A673 (cell line): ENCODE measurements at regions of chrX and their contacts with region 1.

Region 1: DNA sequence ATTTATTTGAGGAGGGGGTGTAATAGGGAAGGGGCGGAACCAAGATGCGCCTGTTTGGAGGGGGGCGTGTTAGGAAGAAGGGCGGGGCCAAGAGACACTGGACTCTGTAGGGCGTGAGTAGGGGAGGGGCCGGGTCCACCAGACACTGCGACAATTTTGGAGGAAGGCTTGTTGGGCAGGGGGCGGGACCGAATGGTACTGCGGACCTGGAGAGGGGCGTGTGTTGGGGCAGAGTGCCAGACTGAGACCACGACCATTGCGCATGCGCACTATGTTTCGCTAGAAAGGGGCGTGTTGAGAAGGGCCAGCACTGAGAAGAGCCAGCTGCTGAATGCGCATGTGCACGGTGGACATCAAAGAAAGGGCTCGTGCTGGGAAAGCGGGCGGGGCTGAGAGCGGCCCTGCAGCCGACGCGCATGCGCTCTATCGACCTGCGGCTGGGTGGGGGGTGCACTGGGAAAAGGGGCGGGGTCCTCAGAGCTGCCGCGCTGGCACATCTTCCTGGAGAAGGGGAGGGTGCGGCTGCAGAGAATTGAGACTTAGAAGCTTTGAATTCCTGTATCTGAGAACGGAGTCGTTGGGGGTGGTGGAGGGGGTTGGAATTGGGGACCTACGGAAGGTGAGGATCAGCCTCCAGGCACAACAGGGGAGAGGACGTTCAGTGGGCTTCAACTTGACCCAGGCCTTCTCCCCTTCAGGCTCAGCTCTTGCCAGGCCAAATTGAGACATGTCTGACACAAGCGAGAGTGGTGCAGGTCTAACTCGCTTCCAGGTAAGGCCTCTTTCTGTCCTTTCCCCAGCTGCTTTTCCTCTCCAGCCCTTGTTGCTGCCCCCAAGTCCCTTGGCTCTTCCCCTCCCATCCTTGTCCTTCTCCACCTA is 1.3 kb downstream of the MAGED2 start:
- DNase-seq: peak; percentile 95
- H3K4me3 ChIP-seq: peak overlapping the region; percentile 54
- H3K27ac ChIP-seq: peak overlapping the region; percentile 59
- H3K4me1 ChIP-seq: peaks cover 3% of the 10 kb centered on the region
- H3K27me3 ChIP-seq: no peaks in the 10 kb centered on the region
- CTCF ChIP-seq: no peak

Region 2: DNA sequence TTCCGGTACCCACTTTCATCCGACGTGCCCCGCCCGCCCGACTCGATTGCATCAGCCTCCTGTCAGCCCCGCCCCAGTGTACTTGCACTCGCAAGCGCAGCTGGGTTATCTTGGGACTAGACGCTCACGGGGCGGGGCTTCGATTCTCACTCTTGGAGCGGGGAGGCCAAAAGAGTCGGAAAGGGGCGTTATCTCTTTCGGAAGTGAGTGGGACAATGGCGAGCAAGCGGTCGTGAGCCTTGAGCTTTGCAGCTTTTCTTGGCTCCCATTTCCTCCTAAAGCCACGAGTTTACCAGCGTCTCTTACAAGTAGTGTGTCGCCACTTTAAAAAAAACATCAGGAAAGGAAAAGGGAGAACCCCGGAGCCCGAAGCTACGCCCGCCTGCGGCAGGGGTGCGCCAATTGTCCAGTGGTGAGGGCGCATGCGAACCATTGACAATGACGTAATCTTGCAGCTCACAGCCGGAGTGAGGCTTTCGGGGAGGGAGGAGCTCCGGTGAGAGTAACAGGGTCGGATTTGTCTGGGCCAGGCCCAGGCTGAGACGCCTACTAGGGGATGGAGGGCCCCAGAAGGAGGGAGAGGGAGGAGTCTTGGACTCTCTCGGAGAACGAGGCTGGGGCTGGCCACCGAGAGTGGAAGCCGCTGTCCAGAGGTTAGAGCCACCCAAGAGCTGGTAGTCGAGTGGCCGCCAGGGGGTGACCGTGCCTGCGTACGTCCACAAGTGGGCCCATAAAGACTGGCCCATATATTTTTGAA is 169.3 kb before region 1 on chrX:
- CTCF ChIA-PET with region 1: no interaction called
- POLR2A ChIA-PET with region 1: interaction called, 4 read pairs
- intact Hi-C with region 1: loop called (anchors 10 kb)
- DNase-seq: peak; percentile 97
- H3K4me3 ChIP-seq: peak overlapping the region; percentile 47
- H3K27ac ChIP-seq: peak overlapping the region; percentile 93
- H3K4me1 ChIP-seq: no peaks in the 10 kb centered on the region
- H3K27me3 ChIP-seq: no peaks in the 10 kb centered on the region
- CTCF ChIP-seq: peak; percentile 52